Esophagus squamous epithelium (tissue), 5 donors: ENCODE measurements at regions of chr17 and their contacts with region 1.

Region 1: DNA sequence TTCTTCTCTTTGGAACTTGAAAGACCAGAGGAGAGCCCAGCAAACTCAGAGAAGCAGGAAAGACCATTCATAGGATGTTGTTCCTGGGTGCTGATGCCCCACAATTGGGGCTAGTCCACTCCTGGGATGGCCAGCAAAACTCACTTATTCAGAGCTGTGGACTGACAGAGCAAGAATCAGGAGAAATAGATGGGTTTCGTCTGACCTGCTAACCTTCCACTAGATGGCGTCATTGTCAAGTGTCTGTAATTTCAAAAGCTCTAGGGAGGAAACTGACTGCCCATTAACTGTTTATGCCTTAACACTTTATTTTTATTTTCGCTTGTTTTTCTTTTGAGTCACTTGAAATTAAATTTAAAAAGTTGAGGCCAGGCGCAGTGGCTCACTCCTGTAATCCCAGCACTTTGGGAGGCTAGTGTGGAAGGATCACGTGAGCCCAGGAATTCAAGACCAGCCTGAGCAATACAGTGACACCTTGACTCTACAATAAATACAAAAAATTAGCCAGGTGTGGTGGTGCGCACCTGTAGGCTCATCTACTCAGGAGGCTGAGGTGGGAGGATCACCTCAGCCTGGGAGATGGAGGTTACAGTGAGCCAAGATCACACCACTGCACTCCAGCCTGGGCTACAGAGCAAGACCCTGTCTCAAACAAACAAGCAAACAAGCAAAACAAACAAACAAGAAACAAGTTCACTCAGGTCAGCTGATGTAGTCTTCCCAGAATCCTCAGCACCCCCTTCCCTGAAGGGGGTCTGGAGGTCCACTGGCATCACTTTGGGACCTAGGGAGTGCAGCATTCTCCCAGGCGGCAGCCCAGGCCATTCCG is 28.6 kb upstream of the MILR1 start:
- DNase-seq: no peak
- H3K4me3 ChIP-seq: no peak overlapping the region
- H3K27ac ChIP-seq: no peak overlapping the region
- H3K4me1 ChIP-seq: peaks cover 0 to 12% (median 0%) of the 10 kb centered on the region in 3 donors
- H3K27me3 ChIP-seq: no peaks in the 10 kb centered on the region
- CTCF ChIP-seq: peak; percentile 69 to 81 (median 74)
- POLR2A ChIP-seq: no peak

Region 2: GRCh38 chr17:64320613-64321553 is 99.5 kb before region 1 on chr17:
- intact Hi-C with region 1: loop called (anchors 5 kb)
- DNase-seq: no peak
- H3K4me3 ChIP-seq: no peak overlapping the region
- H3K27ac ChIP-seq: no peak overlapping the region
- H3K4me1 ChIP-seq: peaks cover 0 to 17% (median 3%) of the 10 kb centered on the region in 3 donors
- H3K27me3 ChIP-seq: peaks cover 0 to 12% (median 0%) of the 10 kb centered on the region in 4 donors
- CTCF ChIP-seq: peak; percentile 60 to 82 (median 71)
- POLR2A ChIP-seq: no peak

Region 3: GRCh38 chr17:64496786-64497564 is 76.6 kb after region 1 on chr17 and contains the start of gene POLG2:
- intact Hi-C with region 1: loop called (anchors 10 kb)
- DNase-seq: peak; percentile 52
- H3K4me3 ChIP-seq: peak within 1 kb of the TSS; percentile 65 to 86 (median 72)
- H3K27ac ChIP-seq: peak within 1 kb of the TSS; percentile 81 to 91 (median 89)
- H3K4me1 ChIP-seq: peaks cover 5 to 80% (median 50%) of the 10 kb centered on the region in 3 donors
- H3K27me3 ChIP-seq: no peaks in the 10 kb centered on the region
- CTCF ChIP-seq: peak; percentile 20 to 63 (median 42)
- POLR2A ChIP-seq: peak in 3 of 4 donors; percentile 23 to 73 (median 58)
- total RNA-seq, gene POLG2: 3.9 to 12.0 (median 8.2) TPM

Region 4: GRCh38 chr17:64515419-64515818 is 95.1 kb after region 1 on chr17:
- intact Hi-C with region 1: no loop called
- DNase-seq: no peak
- H3K4me3 ChIP-seq: no peak overlapping the region
- H3K27ac ChIP-seq: no peak overlapping the region
- H3K4me1 ChIP-seq: no peaks in the 10 kb centered on the region
- H3K27me3 ChIP-seq: no peaks in the 10 kb centered on the region
- CTCF ChIP-seq: no peak
- POLR2A ChIP-seq: no peak